WTC11 (cell line): ENCODE measurements at regions of chr7 and their contacts with region 1.

Region 1: DNA sequence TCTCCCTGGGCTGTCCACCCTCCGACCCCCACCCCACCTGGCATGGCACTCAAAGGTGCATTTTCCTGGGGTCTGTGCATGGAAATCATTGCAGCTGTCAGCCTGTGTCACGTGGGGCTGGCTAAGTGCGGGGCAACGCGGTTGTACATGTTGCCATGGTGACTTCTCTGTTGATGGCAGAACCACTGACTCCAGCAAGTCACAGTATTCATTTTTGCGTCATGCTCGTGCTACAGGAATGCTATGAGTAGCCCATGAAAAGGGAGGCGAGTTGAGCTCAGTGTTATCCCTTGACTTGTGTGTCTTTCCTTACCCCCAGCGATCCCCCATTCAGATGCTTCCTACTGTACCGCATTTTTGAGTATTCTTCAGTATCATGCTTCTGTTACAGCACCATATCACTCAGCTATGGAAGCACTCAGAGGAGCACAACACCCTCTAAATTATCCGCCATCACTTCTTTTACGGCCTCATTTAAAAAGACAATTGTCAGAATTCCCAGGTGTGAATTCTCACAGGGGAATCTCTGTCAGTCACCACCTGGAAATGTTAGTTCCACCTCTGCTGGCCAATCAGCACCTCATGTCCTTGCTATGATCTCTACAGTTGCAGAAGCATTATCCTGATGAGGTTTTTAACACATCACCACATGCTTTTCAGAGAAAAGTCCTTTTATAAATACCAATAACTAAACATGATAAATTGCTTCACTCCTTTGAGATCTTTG is 194.4 kb upstream of the C7orf33 start:
- DNase-seq: no peak
- ATAC-seq: peak; percentile 12
- H3K4me3 Mint-ChIP-seq: peak overlapping the region; percentile 12; the same call in 1 of the 2 replicates
- H3K27ac Mint-ChIP-seq: peak overlapping the region; percentile 26
- H3K4me1 Mint-ChIP-seq: peaks cover 80% of the 10 kb centered on the region
- H3K27me3 Mint-ChIP-seq: no peaks in the 10 kb centered on the region
- CTCF ChIP-seq: no peak

Region 2: GRCh38 chr7:148356303-148356702 is 39.9 kb before region 1 on chr7:
- CTCF ChIA-PET with region 1: no interaction called
- POLR2A ChIA-PET with region 1: no interaction called
- DNase-seq: no peak
- ATAC-seq: no peak
- H3K4me3 Mint-ChIP-seq: no peak overlapping the region
- H3K27ac Mint-ChIP-seq: no peak overlapping the region
- H3K4me1 Mint-ChIP-seq: peaks cover 38% of the 10 kb centered on the region
- H3K27me3 Mint-ChIP-seq: no peaks in the 10 kb centered on the region
- CTCF ChIP-seq: no peak

Region 3: GRCh38 chr7:148412691-148413090 is 16.5 kb after region 1 on chr7:
- CTCF ChIA-PET with region 1: no interaction called
- POLR2A ChIA-PET with region 1: interaction called, 12 read pairs
- DNase-seq: no peak
- ATAC-seq: no peak
- H3K4me3 Mint-ChIP-seq: no peak overlapping the region
- H3K27ac Mint-ChIP-seq: no peak overlapping the region
- H3K4me1 Mint-ChIP-seq: peaks cover 16% of the 10 kb centered on the region
- H3K27me3 Mint-ChIP-seq: no peaks in the 10 kb centered on the region
- CTCF ChIP-seq: no peak